Activated CD4-positive, alpha-beta memory T cell treated with anti-CD3 and anti-CD28 coated beads for 36 hours (primary cell): ENCODE measurements at regions of chr10 and their contacts with region 1.

Region 1: GRCh38 chr10:104353325-104354048 is at the start of gene CFAP58:
- DNase-seq: peak; percentile 94
- H3K4me3 Mint-ChIP-seq: peak within 1 kb of the TSS; percentile 10
- H3K27ac Mint-ChIP-seq: peak within 1 kb of the TSS; percentile 29
- H3K4me1 Mint-ChIP-seq: no peaks in the 10 kb centered on the region
- H3K27me3 Mint-ChIP-seq: no peaks in the 10 kb centered on the region
- total RNA-seq, gene CFAP58: 0.31 to 0.88 TPM

Region 2: DNA sequence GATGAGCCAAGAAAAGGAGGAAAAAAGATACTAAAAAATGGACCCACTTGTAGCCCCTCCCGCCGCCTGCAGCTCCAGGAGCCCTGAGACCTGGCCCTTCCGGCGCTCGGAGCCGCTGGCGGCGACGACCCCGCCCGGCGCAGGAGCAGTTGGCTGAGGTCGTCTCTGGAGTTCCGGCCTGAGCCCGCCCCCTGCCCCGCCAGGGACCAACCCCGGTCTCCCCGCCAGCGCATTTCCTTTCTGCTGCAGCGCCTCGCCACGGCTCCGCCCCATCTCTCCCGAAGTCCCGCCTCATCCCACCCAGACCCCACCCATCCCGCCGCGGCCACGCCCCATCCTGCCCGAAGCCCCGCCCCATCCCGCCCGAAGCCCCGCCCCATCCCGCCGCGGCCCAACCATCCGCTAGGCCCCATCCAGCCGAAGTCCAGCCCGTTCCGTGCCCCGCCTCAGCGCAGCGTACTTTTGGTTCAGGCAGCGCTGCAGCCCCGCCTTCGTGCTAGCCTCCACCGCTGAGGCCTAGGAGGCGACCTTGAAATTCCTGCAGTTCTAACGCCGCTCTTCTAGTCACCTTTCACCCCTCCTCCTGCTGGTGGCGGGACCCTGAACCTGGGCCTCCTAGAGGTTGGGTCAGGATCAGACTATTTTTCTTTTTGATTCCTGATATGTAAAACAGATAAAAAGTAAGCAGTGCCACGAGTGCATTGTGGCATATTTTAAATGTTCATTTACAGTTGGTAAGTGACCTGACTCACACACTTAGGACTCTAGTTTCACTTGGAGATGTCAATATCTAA is 435.2 kb before region 1 on chr10 and contains the start of gene STN1:
- CTCF ChIA-PET with region 1: no interaction called
- POLR2A ChIA-PET with region 1: no interaction called
- intact Hi-C with region 1: loop called (anchors 5 kb)
- DNase-seq: peak; percentile 98
- H3K4me3 Mint-ChIP-seq: peak within 1 kb of the TSS; percentile 98
- H3K27ac Mint-ChIP-seq: peak within 1 kb of the TSS; percentile 98
- H3K4me1 Mint-ChIP-seq: peaks cover 29% of the 10 kb centered on the region
- H3K27me3 Mint-ChIP-seq: no peaks in the 10 kb centered on the region
- total RNA-seq, gene STN1: 56.1 to 57.0 TPM

Region 3: DNA sequence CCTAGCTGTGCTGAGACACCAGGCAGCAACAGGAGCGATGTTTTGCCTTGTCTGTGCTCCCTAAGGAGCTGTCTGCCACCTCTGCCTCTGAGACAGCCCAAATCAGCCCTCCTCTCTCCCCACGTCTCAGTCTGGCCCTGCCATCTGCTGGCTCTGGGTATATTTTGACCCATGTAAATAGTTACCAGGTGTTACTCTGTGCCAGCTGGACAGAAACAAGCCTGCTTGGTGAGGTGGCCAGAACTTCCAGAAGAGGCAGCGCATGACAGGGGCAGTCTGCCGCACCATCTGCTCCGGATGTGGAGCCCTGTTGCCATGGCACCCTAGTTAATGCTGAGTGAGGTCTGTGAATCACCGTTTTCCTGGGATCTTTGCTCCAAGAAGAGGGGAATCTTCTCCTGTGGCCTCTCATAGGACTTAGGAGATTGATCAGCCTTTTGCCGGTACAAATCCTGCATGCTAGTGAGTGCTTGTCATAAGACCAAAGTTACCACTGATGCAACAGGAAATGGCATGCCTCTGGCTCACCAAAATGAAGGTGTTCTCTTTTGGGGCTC is 52.7 kb before region 1 on chr10:
- CTCF ChIA-PET with region 1: interaction called, 240 read pairs
- POLR2A ChIA-PET with region 1: interaction called, 13 read pairs
- intact Hi-C with region 1: loop called (anchors 1 kb)
- DNase-seq: peak; percentile 43
- H3K4me3 Mint-ChIP-seq: no peak overlapping the region
- H3K27ac Mint-ChIP-seq: peak overlapping the region; percentile 43
- H3K4me1 Mint-ChIP-seq: peaks cover 12% of the 10 kb centered on the region
- H3K27me3 Mint-ChIP-seq: peaks cover 2% of the 10 kb centered on the region

Region 4: DNA sequence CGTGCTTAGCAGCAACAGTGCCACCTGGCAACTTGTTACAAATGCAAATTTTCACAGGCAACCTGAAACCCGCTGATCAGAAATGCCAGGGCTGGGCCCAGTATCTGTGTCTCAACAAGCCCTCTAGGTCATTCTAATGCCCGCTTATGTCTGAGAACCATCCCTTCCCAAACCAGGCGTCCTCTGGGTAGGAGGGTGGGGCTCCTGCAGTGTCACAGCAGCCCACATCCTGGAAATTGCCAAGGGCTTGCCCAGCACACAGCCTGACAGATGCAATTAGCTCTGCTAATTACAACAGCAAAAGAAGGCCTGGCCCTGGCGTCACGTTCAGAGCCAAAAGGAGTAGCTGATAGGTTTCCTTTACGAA is 31.1 kb before region 1 on chr10:
- CTCF ChIA-PET with region 1: interaction called, 12 read pairs
- POLR2A ChIA-PET with region 1: interaction called, 5 read pairs
- intact Hi-C with region 1: no loop called
- DNase-seq: peak; percentile 64
- H3K4me3 Mint-ChIP-seq: peak overlapping the region; percentile 10
- H3K27ac Mint-ChIP-seq: peak overlapping the region; percentile 80
- H3K4me1 Mint-ChIP-seq: peaks cover 83% of the 10 kb centered on the region
- H3K27me3 Mint-ChIP-seq: no peaks in the 10 kb centered on the region

Region 5: DNA sequence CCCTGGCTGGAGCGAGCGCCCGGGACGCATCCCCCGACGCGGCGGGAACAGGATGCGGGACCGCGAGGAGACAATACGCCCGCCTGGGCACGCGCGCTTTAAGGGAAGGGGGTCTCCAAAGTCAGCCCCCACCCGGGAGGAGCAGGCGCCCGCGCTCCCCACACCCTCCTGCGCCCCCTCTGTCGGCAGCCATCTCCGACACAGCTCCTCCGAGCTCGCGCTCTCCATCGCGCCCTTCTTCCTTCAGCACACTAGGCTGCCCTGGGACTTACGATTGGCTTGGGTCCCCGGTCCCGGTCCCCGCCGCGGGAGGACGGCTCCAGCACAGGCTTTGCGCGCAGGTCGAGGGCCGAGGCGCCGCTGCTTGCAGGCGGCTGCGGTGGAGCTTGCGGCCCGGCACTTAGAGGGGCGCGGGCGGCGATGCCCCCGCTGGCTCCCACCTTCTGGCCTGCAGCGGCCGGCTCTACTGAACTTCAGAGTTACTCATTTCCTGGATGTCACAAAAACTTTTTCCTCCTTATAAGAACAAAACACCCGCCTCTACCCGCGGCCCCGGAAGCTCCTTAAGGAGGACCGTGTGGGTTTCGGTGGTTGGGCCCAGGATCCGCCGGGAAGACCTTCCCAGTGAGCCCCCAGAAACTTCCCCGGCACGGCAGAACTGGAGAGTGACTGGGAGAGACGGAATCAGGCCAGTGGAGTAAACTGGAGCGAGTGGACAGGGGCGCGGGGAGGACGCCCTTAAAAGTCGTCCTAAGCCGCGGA is 15.3 kb before region 1 on chr10 and contains the start of gene ITPRIP:
- CTCF ChIA-PET with region 1: interaction called, 60 read pairs
- POLR2A ChIA-PET with region 1: interaction called, 16 read pairs
- intact Hi-C with region 1: loop called (anchors 1 kb)
- DNase-seq: peak; percentile 81
- H3K4me3 Mint-ChIP-seq: peak within 1 kb of the TSS; percentile 82
- H3K27ac Mint-ChIP-seq: peak within 1 kb of the TSS; percentile 90
- H3K4me1 Mint-ChIP-seq: peaks cover 48% of the 10 kb centered on the region
- H3K27me3 Mint-ChIP-seq: no peaks in the 10 kb centered on the region
- total RNA-seq, gene ITPRIP: 15.6 to 16.6 TPM